PC-9 (cell line): ENCODE measurements at regions of chr20 and their contacts with region 1.

Region 1: DNA sequence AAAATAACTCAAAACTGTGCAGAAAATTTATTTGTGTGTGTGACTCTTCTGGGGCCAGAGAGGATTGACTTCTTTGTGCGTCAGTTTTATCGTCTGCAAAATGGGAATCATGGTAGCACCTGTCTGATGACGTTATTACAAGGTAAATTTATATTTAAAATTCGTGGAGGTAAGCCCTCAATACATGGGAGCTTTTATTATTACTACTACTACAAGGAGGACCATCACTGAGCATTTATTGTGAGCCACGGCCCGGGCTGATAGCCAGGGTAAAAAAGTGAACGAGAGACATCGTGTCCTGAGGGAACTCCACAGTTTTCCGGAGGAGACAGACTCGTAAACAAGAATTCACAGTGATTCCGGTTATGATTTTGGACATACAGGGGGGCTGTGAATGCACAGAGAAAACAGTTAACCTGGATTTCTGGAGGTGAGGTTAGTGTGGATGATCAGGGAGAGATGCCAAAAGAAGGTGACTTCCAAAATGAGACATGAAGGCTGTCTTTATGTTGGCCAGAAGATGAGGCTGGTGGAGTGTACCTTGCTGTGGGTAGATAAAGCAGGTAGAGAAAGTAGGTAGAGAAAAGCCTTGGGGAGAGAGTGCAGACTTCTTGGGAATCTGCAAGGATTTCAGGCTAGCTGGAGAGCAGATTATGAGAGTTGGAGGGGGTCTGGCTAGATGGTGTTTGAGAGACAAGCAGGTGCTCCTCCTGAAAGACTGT is 10.6 kb upstream of the SERINC3 start:
- DNase-seq: no peak
- H3K4me3 ChIP-seq: peak overlapping the region; percentile 84
- H3K27ac ChIP-seq: 0 out of 2 replicates have a peak overlapping the region, but pooled peaks have one; percentile 3
- H3K4me1 ChIP-seq: peaks cover 20% of the 10 kb centered on the region
- H3K27me3 ChIP-seq: no peaks in the 10 kb centered on the region
- CTCF ChIP-seq: no peak

Region 2: GRCh38 chr20:43472671-43473380 is 1059.6 kb before region 1 on chr20:
- CTCF ChIA-PET with region 1: no interaction called
- POLR2A ChIA-PET with region 1: interaction called, 28 read pairs
- intact Hi-C with region 1: no loop called
- DNase-seq: no peak
- H3K4me3 ChIP-seq: no peak overlapping the region
- H3K27ac ChIP-seq: no peak overlapping the region
- H3K4me1 ChIP-seq: no peaks in the 10 kb centered on the region
- H3K27me3 ChIP-seq: no peaks in the 10 kb centered on the region
- CTCF ChIP-seq: no peak

Region 3: DNA sequence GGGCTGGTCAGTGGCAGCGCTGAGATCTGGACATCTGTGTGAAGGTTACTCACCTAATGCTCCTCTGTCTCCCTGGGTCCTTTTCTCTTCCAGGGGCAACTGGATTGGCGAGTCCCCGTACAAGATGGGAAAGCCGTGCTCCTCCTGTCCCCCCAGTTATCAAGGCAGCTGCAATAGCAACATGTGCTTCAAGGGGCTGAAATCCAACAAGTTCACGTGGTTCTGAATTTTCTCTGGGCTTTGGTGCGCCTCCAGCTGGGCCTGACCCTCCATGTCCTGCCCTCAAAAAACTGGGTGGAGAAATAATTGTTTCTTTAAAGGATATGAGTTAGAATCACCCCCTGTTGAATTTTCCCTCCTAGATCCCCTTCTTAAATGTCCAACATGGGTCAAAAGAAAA is 181.9 kb before region 1 on chr20:
- CTCF ChIA-PET with region 1: no interaction called
- POLR2A ChIA-PET with region 1: no interaction called
- intact Hi-C with region 1: no loop called
- DNase-seq: no peak
- H3K4me3 ChIP-seq: no peak overlapping the region
- H3K27ac ChIP-seq: no peak overlapping the region
- H3K4me1 ChIP-seq: no peaks in the 10 kb centered on the region
- H3K27me3 ChIP-seq: peaks cover 12% of the 10 kb centered on the region; the same call in 1 of the 2 replicates
- CTCF ChIP-seq: no peak

Region 4: DNA sequence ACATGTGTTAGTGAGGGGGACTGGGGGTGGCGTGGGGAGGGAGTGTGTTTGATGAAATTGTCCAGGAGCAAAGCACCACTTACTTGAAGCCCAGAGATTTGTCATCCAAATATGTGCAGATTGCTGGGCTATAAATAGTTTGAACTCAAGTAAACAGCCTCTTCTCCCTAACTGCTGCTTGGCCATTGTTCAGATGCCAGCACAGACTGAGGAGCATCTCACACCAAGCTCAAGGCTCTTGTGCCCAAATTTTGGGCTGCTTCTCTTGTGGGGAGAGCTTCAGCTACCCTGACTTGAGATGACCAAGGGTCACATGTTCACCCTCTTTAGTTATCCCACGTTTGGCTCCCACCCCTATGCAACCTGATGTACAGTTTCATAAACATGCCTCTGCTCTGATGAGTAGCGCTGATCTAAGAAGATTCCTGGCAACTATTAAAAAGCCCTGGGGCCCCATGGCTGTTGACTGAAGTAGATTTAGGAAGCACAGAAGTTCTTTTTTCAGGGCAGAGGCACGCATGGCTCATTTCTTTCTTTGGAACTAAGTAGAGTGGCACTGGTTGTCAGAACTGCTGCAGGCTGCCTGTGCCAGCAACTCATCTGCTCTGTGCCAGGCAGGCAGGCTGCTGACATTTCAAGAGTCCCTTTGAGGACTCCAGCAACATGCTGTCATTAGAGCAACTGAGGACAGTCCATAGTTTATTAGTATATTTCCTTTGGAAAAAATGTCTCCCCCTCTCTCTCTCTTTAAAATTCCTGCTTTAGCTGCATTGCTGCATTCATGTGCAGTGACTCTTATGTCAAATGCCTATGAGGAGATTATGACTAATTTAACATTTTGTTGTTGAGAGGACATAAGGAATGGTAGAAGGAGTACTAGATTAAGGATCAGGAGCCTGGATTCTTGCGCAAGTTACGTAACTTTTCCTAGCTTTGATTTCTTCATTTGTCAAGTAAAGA is 40.4 kb after region 1 on chr20:
- CTCF ChIA-PET with region 1: no interaction called
- POLR2A ChIA-PET with region 1: no interaction called
- intact Hi-C with region 1: loop called (anchors 5 kb)
- DNase-seq: peak; percentile 55 to 97
- H3K4me3 ChIP-seq: peak overlapping the region; percentile 3; the same call in 1 of the 2 replicates
- H3K27ac ChIP-seq: peak overlapping the region; percentile 87
- H3K4me1 ChIP-seq: peaks cover 42% of the 10 kb centered on the region
- H3K27me3 ChIP-seq: no peaks in the 10 kb centered on the region
- CTCF ChIP-seq: no peak

Region 5: DNA sequence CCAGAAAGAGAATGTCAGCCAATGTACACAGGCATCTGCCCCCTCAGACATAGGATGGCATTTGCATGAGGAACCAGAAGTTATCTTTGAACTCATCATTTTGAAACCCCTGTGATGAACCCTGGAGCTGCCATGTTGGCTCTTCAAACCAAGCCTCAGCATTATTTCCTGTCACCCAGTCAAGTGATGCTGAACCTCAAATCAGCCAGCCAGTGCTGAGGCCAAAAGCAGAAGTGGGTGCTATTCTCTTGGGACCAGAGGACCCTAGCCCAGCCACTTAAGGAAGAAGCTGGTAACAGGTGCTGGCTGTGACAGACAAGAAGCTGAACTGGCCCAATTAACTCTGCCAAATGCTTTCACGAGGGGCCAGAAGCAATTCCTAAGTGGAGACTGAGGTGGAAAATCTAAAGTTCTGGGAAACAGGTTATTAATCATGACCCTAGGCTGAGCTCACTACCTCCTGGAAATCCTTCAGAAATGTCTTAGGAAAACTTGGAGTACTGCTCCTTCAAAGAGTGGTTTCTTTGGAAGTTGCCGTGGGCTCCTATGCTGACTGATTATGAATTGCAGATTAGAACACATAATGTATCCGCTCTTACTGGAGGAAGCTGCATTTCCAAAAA is 54.0 kb after region 1 on chr20:
- CTCF ChIA-PET with region 1: no interaction called
- POLR2A ChIA-PET with region 1: no interaction called
- intact Hi-C with region 1: no loop called
- DNase-seq: no peak
- H3K4me3 ChIP-seq: no peak overlapping the region
- H3K27ac ChIP-seq: no peak overlapping the region
- H3K4me1 ChIP-seq: no peaks in the 10 kb centered on the region
- H3K27me3 ChIP-seq: no peaks in the 10 kb centered on the region
- CTCF ChIP-seq: no peak

Region 6: GRCh38 chr20:44598423-44599305 is 66.2 kb after region 1 on chr20:
- CTCF ChIA-PET with region 1: interaction called, 9 read pairs
- POLR2A ChIA-PET with region 1: interaction called, 11 read pairs
- intact Hi-C with region 1: no loop called
- DNase-seq: no peak
- H3K4me3 ChIP-seq: no peak overlapping the region
- H3K27ac ChIP-seq: no peak overlapping the region
- H3K4me1 ChIP-seq: peaks cover 17% of the 10 kb centered on the region
- H3K27me3 ChIP-seq: no peaks in the 10 kb centered on the region
- CTCF ChIP-seq: peak; percentile 42; the same call in 1 of the 2 replicates

Region 7: DNA sequence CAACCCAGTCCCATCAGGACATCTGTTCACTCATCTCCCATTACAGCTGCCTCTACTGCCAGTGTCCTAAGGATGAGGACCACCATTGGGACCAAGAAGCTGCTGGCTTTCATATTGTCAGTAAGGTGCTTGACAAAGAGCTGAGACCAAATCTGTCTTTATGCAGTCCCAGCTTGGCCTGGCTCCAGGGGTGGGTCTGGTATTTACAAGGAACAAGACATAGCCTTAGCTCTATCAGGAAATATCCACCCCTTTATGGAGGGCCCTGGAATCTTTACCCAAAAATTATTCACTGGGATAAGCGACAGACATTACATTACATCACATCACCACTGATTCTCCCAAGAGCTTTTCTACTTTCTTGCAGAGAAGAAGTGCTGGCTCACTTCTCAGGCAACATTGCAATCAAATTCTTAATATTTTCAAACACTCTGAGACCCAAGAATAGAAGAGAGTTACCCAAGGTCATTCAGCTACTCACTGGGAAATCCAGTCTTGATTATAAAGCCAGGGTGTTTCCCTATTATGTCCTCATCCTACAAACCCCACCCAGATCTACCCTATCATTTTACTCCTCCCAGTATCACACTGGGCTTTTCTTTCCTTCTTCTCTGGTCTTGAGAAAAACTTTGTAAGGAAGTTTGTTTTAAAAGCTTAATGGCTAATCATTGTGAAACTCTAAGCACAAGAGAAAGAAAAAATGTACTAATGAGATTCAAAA is 630.8 kb after region 1 on chr20:
- CTCF ChIA-PET with region 1: no interaction called
- POLR2A ChIA-PET with region 1: no interaction called
- intact Hi-C with region 1: no loop called
- DNase-seq: no peak
- H3K4me3 ChIP-seq: no peak overlapping the region
- H3K27ac ChIP-seq: no peak overlapping the region
- H3K4me1 ChIP-seq: peaks cover 3% of the 10 kb centered on the region
- H3K27me3 ChIP-seq: no peaks in the 10 kb centered on the region
- CTCF ChIP-seq: no peak